HEK293 (cell line): ENCODE measurements at regions of chr2 and their contacts with region 1.

Region 1: DNA sequence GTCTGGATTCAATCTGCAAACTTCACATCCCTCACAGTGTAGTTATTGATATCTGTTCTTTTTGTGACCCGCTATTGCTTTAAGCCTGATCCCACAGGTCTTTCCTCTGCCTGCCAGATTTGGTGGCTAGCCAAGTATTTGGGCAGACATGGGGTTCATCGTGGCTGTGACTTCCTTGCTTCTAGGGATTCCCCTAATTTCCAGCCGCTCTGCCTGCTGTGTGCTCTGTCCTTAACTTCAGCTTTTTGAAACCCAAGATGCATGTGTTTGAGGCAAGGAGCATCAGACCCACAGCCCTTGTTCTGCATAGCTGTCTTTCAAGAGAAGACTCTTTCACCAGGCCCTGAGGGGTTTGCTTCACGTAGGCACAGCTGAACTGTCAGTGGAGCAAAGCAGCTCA is 54.2 kb downstream of the NCAPH start:
- H3K4me3 ChIP-seq: no peak overlapping the region
- H3K27ac ChIP-seq: no peak overlapping the region
- H3K4me1 ChIP-seq: no peaks in the 10 kb centered on the region
- CTCF ChIP-seq: no peak

Region 2: DNA sequence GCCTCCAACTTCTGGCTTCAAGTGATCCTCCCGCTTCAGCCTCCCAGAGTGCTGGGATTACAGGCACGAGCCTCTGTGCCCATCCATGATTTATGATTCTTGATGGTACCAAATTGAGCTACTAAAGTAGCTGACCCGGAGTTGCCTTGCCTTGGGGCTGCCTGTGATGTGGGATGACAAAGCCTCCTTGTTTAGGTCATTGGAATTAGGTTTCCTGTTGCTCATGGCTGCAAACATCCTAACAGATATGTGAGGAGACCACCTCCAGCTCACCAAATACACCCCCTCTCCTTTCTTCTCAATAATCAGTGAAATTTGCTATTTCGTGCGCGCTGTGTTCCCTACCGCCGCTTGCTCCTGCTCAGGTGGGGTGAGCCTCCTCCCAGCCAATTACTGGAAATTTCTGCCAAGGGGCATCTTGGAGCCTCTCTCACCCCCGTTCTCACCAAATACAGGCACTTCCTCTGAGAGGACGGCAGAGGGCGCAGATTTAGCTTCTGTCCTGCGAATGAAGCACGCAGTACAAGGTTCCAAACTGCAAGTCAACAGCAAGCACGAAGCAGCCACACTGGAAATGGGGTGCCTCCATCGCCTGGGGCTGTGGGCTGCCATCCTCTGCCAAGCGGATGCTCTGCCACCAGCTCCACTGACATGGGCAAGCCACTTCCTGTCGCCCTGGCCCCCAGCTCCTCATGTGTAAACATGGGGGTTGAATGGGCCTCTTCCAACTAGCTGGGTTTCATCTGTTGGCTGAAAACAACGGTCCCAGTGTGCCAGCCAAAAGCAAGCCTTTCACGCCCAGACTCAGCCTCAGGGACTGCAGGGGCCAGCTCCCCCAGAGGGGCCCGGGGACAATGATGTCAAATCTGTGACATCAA is 17.5 kb after region 1 on chr2:
- CTCF ChIA-PET with region 1: interaction called, 18 read pairs
- POLR2A ChIA-PET with region 1: no interaction called
- H3K4me3 ChIP-seq: no peak overlapping the region
- H3K27ac ChIP-seq: no peak overlapping the region
- H3K4me1 ChIP-seq: peaks cover 8% of the 10 kb centered on the region
- CTCF ChIP-seq: peak; percentile 80